ENCODE measurements at regions of chr20 and their contacts with region 1.

Region 1: GRCh38 chr20:1764136-1765033 is 106.8 kb upstream of the SIRPG start:
- DNase-seq: peak; percentile 77
- ATAC-seq: peak; percentile 79
- H3K4me3 ChIP-seq: no peak overlapping the region
- H3K4me3 Mint-ChIP-seq: no peak overlapping the region
- H3K27ac ChIP-seq: no peak overlapping the region
- H3K27ac Mint-ChIP-seq: no peak overlapping the region
- H3K4me1 ChIP-seq: no peaks in the 10 kb centered on the region
- H3K4me1 Mint-ChIP-seq: peaks cover 1% of the 10 kb centered on the region
- H3K27me3 ChIP-seq: peaks cover 0 to 3% (median 0%) of the 10 kb centered on the region in 4 experiments
- H3K27me3 Mint-ChIP-seq: peaks cover 13% of the 10 kb centered on the region
- CTCF ChIP-seq: peak; percentile 87

Region 2: GRCh38 chr20:2093159-2093781 is 328.9 kb after region 1 on chr20:
- CTCF ChIA-PET with region 1: interaction called, 29 read pairs
- POLR2A ChIA-PET with region 1: no interaction called
- intact Hi-C with region 1: loop called (anchors 1 kb)
- DNase-seq: peak; percentile 51
- ATAC-seq: no peak
- H3K4me3 ChIP-seq: no peak overlapping the region
- H3K4me3 Mint-ChIP-seq: no peak overlapping the region
- H3K27ac ChIP-seq: no peak overlapping the region
- H3K27ac Mint-ChIP-seq: no peak overlapping the region
- H3K4me1 ChIP-seq: no peaks in the 10 kb centered on the region
- H3K4me1 Mint-ChIP-seq: peaks cover 2% of the 10 kb centered on the region
- H3K27me3 ChIP-seq: peaks cover 0 to 23% (median 7%) of the 10 kb centered on the region in 4 experiments
- H3K27me3 Mint-ChIP-seq: peaks cover 46% of the 10 kb centered on the region
- CTCF ChIP-seq: peak; percentile 77

Region 3: GRCh38 chr20:2451939-2452732 is 687.8 kb after region 1 on chr20:
- CTCF ChIA-PET with region 1: interaction called, 11 read pairs
- POLR2A ChIA-PET with region 1: no interaction called
- intact Hi-C with region 1: loop called (anchors 1 kb)
- DNase-seq: peak; percentile 63
- ATAC-seq: peak; percentile 53
- H3K4me3 ChIP-seq: no peak overlapping the region
- H3K4me3 Mint-ChIP-seq: no peak overlapping the region
- H3K27ac ChIP-seq: no peak overlapping the region
- H3K27ac Mint-ChIP-seq: no peak overlapping the region
- H3K4me1 ChIP-seq: no peaks in the 10 kb centered on the region
- H3K4me1 Mint-ChIP-seq: no peaks in the 10 kb centered on the region
- H3K27me3 ChIP-seq: no peaks in the 10 kb centered on the region
- H3K27me3 Mint-ChIP-seq: no peaks in the 10 kb centered on the region
- CTCF ChIP-seq: peak; percentile 83